ENCODE measurements at regions of chr10 and their contacts with region 1.

Region 1: DNA sequence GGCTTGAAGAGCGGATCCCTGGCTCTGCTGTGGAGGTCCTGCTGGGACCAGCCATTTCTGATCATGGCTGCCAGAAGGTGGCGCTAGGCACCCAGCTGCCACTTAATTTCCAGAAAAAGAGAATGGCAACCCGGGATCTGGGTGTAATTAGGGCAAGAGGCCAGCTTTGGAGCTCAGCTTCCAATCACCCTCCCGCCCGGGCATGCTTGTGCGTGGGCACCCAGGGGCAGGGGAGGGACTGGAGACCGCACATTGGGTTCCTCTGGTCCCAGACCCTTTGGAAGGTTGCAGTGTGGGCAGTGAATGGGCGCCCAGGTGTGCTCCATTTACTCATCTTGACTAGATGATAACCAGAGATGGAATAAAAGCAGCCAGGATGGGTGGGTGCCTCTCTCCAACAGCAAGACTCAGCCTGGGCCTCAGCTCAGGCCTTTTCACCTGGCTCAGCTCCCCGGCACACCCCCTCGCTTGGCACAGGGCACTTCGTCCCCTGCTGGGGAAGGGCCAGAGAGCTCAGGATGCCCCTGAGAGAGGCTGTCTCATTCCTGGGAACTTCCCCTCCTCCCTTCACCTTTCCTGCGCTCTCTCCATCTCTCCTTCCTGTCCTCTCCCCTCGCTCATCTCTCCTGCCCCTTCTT is 14.7 kb downstream of the FAM241B start:
- DNase-seq: no peak
- H3K4me3 ChIP-seq: no peak overlapping the region
- H3K27me3 ChIP-seq: peaks cover 6% of the 10 kb centered on the region
- CTCF ChIP-seq: peak; percentile 81

Region 2: GRCh38 chr10:69620625-69621024 is 24.2 kb before region 1 on chr10:
- CTCF ChIA-PET with region 1: no interaction called
- POLR2A ChIA-PET with region 1: no interaction called
- DNase-seq: no peak
- H3K4me3 ChIP-seq: no peak overlapping the region
- H3K27me3 ChIP-seq: peaks cover 12% of the 10 kb centered on the region
- CTCF ChIP-seq: no peak

Region 3: GRCh38 chr10:69655124-69655867 is 10.5 kb after region 1 on chr10:
- CTCF ChIA-PET with region 1: interaction called, 14 read pairs
- POLR2A ChIA-PET with region 1: no interaction called
- DNase-seq: no peak
- H3K4me3 ChIP-seq: no peak overlapping the region
- H3K27me3 ChIP-seq: peaks cover 19% of the 10 kb centered on the region
- CTCF ChIP-seq: no peak

Region 4: GRCh38 chr10:69663369-69663947 is 18.7 kb after region 1 on chr10:
- CTCF ChIA-PET with region 1: interaction called, 13 read pairs
- POLR2A ChIA-PET with region 1: no interaction called
- DNase-seq: no peak
- H3K4me3 ChIP-seq: no peak overlapping the region
- H3K27me3 ChIP-seq: peaks cover 35% of the 10 kb centered on the region
- CTCF ChIP-seq: no peak

Region 5: GRCh38 chr10:69696073-69696731 is 51.4 kb after region 1 on chr10:
- CTCF ChIA-PET with region 1: interaction called, 14 read pairs
- POLR2A ChIA-PET with region 1: no interaction called
- DNase-seq: peak; percentile 93
- H3K4me3 ChIP-seq: no peak overlapping the region
- H3K27me3 ChIP-seq: peaks cover 15% of the 10 kb centered on the region
- CTCF ChIP-seq: peak; percentile 76

Region 6: GRCh38 chr10:69739634-69740033 is 94.9 kb after region 1 on chr10:
- CTCF ChIA-PET with region 1: no interaction called
- POLR2A ChIA-PET with region 1: no interaction called
- DNase-seq: no peak
- H3K4me3 ChIP-seq: no peak overlapping the region
- H3K27me3 ChIP-seq: peaks cover 5% of the 10 kb centered on the region; the same call in 1 of the 2 replicates
- CTCF ChIP-seq: no peak